ENCODE measurements at regions of chr1 and their contacts with region 1.

Region 1: DNA sequence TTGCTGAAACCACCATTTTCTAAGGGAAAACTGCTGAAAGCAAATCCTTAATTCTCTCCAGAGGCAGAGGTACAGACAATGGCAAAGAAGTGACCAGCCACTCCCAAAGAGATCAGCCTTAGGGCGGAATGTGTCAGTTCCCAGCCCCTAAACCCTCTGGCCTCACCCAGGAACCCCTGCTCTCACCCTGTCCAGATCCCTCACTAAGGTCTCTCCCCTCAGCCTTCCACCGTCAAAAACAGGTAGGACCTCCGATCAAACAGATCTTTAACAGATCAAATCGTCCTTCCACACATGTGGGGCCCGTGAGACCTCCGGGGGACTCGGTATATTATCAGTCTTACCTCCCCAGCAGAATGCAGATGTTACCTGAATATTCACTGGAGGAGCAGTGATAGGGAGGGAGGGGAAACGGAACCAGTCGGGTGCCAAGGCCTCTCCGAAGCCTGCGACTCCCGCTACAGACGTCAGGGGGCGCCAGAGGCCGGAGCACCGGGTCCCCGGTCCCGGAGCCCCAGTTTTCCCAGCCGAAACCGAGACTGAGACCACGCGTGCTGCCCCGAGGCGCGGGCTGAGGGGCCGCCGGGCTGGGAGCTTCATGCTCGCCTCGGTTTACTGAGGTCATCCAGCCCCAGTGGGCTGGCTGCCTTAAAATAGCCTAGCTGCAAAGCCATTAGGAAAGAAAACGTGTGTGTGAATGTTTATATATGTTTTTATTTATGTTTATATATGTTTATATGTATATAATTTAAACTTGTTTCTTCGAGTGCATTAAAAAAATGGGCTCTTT is 23.6 kb downstream of the GPA33 start:
- DNase-seq: peak; percentile 61 to 78
- H3K4me3 ChIP-seq: peak overlapping the region in 1 of 2 donors; percentile 27
- H3K27ac ChIP-seq: no peak overlapping the region
- H3K4me1 ChIP-seq: peaks cover 0 to 6% (median 1%) of the 10 kb centered on the region in 4 donors
- H3K27me3 ChIP-seq: no peaks in the 10 kb centered on the region
- CTCF ChIP-seq: peak; percentile 94 to 97

Region 2: GRCh38 chr1:166884040-166884642 is 182.4 kb before region 1 on chr1:
- intact Hi-C with region 1: loop called (anchors 10 kb)
- DNase-seq: no peak
- H3K4me3 ChIP-seq: peak overlapping the region in 1 of 2 donors; percentile 9
- H3K27ac ChIP-seq: no peak overlapping the region
- H3K4me1 ChIP-seq: peaks cover 0 to 6% (median 5%) of the 10 kb centered on the region in 4 donors
- H3K27me3 ChIP-seq: peaks cover 0 to 33% of the 10 kb centered on the region in 2 donors
- CTCF ChIP-seq: peak; percentile 54 to 60

Region 3: DNA sequence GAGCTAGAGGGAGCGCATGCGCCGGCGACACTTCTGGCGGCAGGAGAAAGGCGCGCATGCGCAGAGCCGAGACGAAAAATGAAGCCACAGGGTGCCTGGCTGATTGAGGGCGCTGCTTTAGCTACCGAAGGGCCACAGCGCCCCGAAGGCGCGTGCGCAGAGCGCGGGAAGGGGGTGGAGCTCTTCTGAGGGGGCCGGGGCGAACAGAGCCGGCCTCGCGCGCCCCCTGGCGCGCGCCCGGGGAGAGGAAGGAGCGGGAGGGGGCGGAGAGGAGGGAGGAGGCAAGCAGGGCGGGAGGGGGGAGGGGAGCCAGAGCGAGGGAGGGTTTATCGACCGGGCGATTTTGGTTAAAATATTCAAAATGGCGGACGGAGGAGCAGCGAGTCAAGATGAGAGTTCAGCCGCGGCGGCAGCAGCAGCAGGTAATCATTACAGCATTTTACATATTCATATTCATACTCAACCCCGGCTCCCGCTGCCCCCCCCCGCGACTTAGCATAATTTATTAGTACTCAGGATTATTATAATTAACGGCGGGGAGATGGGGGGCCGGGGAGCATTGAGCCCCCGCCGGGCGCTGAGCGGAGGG is 154.1 kb after region 1 on chr1 and contains the start of gene POU2F1:
- intact Hi-C with region 1: loop called (anchors 10 kb)
- DNase-seq: peak; percentile 99
- H3K4me3 ChIP-seq: peak within 1 kb of the TSS; percentile 93 to 94
- H3K27ac ChIP-seq: peak within 1 kb of the TSS; percentile 95 to 99
- H3K4me1 ChIP-seq: peaks cover 0 to 30% (median 11%) of the 10 kb centered on the region in 4 donors
- H3K27me3 ChIP-seq: no peaks in the 10 kb centered on the region
- CTCF ChIP-seq: peak; percentile 55 to 67

Region 4: DNA sequence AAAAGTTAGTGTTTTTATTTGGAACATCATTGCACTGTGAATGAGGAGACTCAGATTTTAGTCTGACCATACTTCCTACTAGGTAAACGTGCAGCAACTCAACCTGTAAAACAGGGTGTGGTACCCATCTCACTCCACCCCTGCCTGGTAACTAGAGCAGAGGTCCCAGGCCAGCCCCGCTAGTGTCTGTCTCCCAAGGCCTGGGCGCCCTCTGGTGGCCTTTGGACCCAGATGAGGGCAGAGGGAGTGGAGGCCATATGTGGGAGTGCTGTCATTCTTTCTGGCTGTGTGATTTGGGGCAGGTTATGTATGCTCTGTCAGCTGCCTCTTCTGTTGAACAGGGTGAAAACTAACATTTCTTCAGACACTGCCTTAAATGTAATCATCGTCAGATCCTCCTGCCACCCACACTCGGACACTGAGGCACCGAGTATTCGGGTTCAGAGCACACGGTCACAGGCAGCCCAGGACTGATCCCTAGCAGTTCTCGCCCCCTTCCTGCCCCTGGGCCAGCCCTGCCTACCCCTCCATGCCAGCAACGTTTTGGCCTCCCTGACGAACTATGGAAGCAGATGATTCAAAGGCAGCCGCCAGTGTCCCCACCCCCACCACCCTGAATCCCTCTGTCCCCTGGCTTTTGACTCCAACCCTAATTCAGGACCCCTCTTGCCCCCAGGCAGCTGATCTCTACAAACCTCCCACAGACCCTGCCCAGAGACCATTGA is 375.8 kb after region 1 on chr1:
- intact Hi-C with region 1: loop called (anchors 2 kb)
- DNase-seq: peak; percentile 85 to 88
- H3K4me3 ChIP-seq: no peak overlapping the region
- H3K27ac ChIP-seq: no peak overlapping the region
- H3K4me1 ChIP-seq: peaks cover 0 to 11% (median 9%) of the 10 kb centered on the region in 4 donors
- H3K27me3 ChIP-seq: peaks cover 0 to 15% of the 10 kb centered on the region in 2 donors
- CTCF ChIP-seq: peak; percentile 78 to 85

Region 5: GRCh38 chr1:167533851-167534300 is 467.3 kb after region 1 on chr1:
- intact Hi-C with region 1: loop called (anchors 5 kb)
- DNase-seq: peak in 1 of 2 donors; percentile 38
- H3K4me3 ChIP-seq: no peak overlapping the region
- H3K27ac ChIP-seq: no peak overlapping the region
- H3K4me1 ChIP-seq: peaks cover 0 to 3% (median 0%) of the 10 kb centered on the region in 4 donors
- H3K27me3 ChIP-seq: no peaks in the 10 kb centered on the region
- CTCF ChIP-seq: peak; percentile 75 to 87

Measured in tibial artery (tissue), 4 donors.